HepG2 (cell line): ENCODE measurements at regions of chr10 and their contacts with region 1.

Region 1: GRCh38 chr10:17257466-17258321 is 29.7 kb downstream of the VIM start:
- DNase-seq: peak; percentile 44
- ATAC-seq: peak; percentile 81
- H3K4me3 ChIP-seq: no peak overlapping the region
- H3K27ac ChIP-seq: no peak overlapping the region
- H3K4me1 ChIP-seq: no peaks in the 10 kb centered on the region
- H3K27me3 ChIP-seq: no peaks in the 10 kb centered on the region
- CTCF ChIP-seq: peak; percentile 80
- EP300 ChIP-seq: no peak
- POLR2A ChIP-seq: no peak
- RAD21 ChIP-seq: peak; percentile 69

Region 2: GRCh38 chr10:16828114-16828568 is 429.6 kb before region 1 on chr10:
- CTCF ChIA-PET with region 1: interaction called, 9 read pairs
- POLR2A ChIA-PET with region 1: no interaction called
- in situ Hi-C with region 1: no loop called
- intact Hi-C with region 1: loop called (anchors 1 kb)
- DNase-seq: peak; percentile 69
- ATAC-seq: peak; percentile 80
- H3K4me3 ChIP-seq: no peak overlapping the region
- H3K27ac ChIP-seq: no peak overlapping the region
- H3K4me1 ChIP-seq: no peaks in the 10 kb centered on the region
- H3K27me3 ChIP-seq: no peaks in the 10 kb centered on the region; a peak in 1 of 5 replicates
- CTCF ChIP-seq: peak; percentile 68
- EP300 ChIP-seq: no peak
- POLR2A ChIP-seq: no peak
- RAD21 ChIP-seq: no peak

Region 3: GRCh38 chr10:16843252-16843870 is 414.3 kb before region 1 on chr10:
- CTCF ChIA-PET with region 1: interaction called, 30 read pairs
- POLR2A ChIA-PET with region 1: no interaction called
- in situ Hi-C with region 1: loop called (anchors 5 kb)
- intact Hi-C with region 1: loop called (anchors 1 kb)
- DNase-seq: peak; percentile 64
- ATAC-seq: peak; percentile 74
- H3K4me3 ChIP-seq: no peak overlapping the region
- H3K27ac ChIP-seq: no peak overlapping the region
- H3K4me1 ChIP-seq: no peaks in the 10 kb centered on the region
- H3K27me3 ChIP-seq: no peaks in the 10 kb centered on the region
- CTCF ChIP-seq: peak; percentile 66
- EP300 ChIP-seq: no peak
- POLR2A ChIP-seq: no peak
- RAD21 ChIP-seq: no peak

Region 4: GRCh38 chr10:16853201-16853600 is 404.5 kb before region 1 on chr10:
- CTCF ChIA-PET with region 1: no interaction called
- POLR2A ChIA-PET with region 1: no interaction called
- in situ Hi-C with region 1: loop called (anchors 5 kb)
- intact Hi-C with region 1: no loop called
- DNase-seq: peak; percentile 10
- ATAC-seq: peak; percentile 48; the same call in 2 of the 3 replicates
- H3K4me3 ChIP-seq: no peak overlapping the region
- H3K27ac ChIP-seq: no peak overlapping the region
- H3K4me1 ChIP-seq: no peaks in the 10 kb centered on the region
- H3K27me3 ChIP-seq: no peaks in the 10 kb centered on the region
- CTCF ChIP-seq: peak; percentile 56
- EP300 ChIP-seq: no peak
- POLR2A ChIP-seq: no peak
- RAD21 ChIP-seq: no peak

Region 5: GRCh38 chr10:16891375-16892313 is 366.1 kb before region 1 on chr10:
- CTCF ChIA-PET with region 1: no interaction called
- POLR2A ChIA-PET with region 1: no interaction called
- in situ Hi-C with region 1: loop called (anchors 10 kb)
- intact Hi-C with region 1: loop called (anchors 1 kb)
- DNase-seq: peak; percentile 30
- ATAC-seq: peak; percentile 91
- H3K4me3 ChIP-seq: 0 out of 6 replicates have a peak overlapping the region, but pooled peaks of 1 of the 3 experiments have one; percentile 15
- H3K27ac ChIP-seq: no peak overlapping the region
- H3K4me1 ChIP-seq: no peaks in the 10 kb centered on the region
- H3K27me3 ChIP-seq: no peaks in the 10 kb centered on the region
- CTCF ChIP-seq: peak; percentile 59
- EP300 ChIP-seq: no peak
- POLR2A ChIP-seq: peak in 1 of 2 experiments; percentile 79; a peak in 2 of 4 replicates
- RAD21 ChIP-seq: no peak